ENCODE measurements at regions of chr1 and their contacts with region 1.

Region 1: GRCh38 chr1:205528887-205529825 is 24.7 kb downstream of the CDK18 start:
- DNase-seq: peak; percentile 82
- H3K4me3 ChIP-seq: peak overlapping the region; percentile 58
- H3K27ac ChIP-seq: peak overlapping the region; percentile 12
- H3K4me1 ChIP-seq: peaks cover 41% of the 10 kb centered on the region
- H3K27me3 ChIP-seq: no peaks in the 10 kb centered on the region
- CTCF ChIP-seq: peak; percentile 95

Region 2: DNA sequence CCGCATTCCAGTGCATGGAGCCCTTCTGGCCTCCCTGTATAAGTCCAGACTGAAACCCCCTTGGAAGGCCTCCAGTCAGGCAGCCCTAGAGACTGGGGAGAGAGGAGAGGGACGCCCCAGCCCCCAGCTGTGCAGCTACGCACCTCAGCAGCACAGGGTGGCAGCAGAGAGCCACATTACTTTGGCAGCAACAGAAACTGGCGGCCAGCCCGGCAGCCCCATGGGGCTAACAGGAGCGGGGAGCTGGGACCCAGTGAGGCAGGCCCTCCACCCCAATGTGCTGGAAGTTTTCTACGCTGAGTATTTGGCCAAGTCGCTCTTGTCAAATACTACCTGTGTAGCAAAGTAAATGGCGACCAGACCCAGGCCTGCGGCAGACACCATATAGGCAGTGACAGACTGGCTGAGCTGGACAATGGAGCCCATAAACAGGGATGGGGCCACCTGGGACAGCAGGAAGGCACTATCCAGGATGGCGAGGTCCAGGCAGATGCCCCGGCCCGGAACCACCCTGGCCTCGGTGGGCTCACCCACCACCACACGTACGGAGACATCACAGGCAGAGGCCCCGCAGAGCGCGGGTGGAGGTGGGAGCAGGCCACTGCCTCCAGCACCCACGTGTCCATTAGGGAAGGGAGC is 129.9 kb after region 1 on chr1:
- intact Hi-C with region 1: loop called (anchors 5 kb)
- DNase-seq: peak; percentile 81
- H3K4me3 ChIP-seq: no peak overlapping the region
- H3K27ac ChIP-seq: no peak overlapping the region
- H3K4me1 ChIP-seq: peaks cover 21% of the 10 kb centered on the region
- H3K27me3 ChIP-seq: no peaks in the 10 kb centered on the region
- CTCF ChIP-seq: peak; percentile 92

Measured in left ventricle myocardium inferior (tissue), 1 donor.